Common myeloid progenitor, CD34-positive (primary cell): ENCODE measurements at regions of chr2 and their contacts with region 1.

Region 1: DNA sequence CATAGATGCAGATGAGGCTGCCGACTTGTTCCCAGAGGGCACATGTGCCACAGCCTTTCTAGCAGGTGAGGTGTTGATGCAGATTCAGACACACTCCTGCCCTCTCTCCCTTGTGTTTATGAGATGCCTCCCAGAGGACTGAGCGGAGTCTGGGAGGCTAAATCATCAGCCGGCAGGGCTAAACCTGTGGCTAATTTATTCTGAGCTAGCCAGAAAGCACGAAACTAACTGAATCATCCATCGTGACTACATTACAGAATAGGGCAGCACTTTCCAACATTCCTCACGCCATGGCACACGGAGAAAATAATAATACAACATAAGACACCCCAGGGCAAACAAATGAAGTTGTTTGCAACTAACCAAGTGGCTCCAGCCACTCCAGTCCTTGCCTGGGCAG is 101.7 kb upstream of the FZD7 start:
- DNase-seq: no peak
- H3K4me3 ChIP-seq: no peak overlapping the region
- H3K27ac ChIP-seq: no peak overlapping the region
- H3K4me1 ChIP-seq: peaks cover 0 to 26% (median 9%) of the 10 kb centered on the region in 4 experiments
- H3K27me3 ChIP-seq: no peaks in the 10 kb centered on the region

Region 2: DNA sequence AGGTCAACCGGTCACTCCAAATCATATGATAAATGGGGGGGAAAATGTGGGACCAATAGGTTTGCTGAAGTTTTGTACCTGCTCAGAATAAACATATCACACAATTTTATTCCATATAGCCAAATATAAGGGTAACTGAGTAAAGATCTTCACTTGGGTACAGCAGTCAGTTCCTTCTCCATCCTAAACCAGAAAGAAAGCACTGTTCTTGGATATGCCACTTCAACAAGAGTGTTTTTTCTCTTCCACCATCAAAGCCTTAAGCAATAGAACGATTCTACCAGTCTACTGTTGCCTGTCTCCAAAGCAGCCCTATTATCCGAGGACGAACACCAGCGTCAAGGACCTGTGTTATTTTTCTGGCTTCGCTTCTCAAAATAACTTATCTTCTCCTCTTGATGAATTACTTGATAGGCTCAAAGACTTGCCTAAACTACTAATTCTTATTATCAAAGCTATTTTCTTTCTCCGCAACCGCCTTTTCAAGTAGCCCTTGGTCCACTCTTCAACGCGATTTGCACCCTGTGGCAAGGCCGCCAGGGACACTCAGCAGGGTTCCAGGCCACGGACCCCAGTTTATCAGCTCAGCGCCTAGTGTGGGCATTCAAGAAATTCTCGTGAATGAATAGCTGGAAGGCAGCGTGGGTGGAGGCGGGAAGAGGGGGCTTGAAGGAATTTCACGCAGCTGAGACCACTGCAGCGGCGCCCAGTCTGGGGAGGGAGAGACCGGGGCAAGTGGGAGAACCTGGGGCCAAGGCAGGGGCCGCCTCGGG is 151.9 kb before region 1 on chr2:
- CTCF ChIA-PET with region 1: no interaction called
- POLR2A ChIA-PET with region 1: interaction called, 12 read pairs
- DNase-seq: peak; percentile 31 to 58 (median 39)
- H3K4me3 ChIP-seq: peak overlapping the region; percentile 82 to 99 (median 91)
- H3K27ac ChIP-seq: peak overlapping the region; percentile 85 to 92
- H3K4me1 ChIP-seq: peaks cover 7 to 75% (median 51%) of the 10 kb centered on the region in 4 experiments
- H3K27me3 ChIP-seq: no peaks in the 10 kb centered on the region

Region 3: DNA sequence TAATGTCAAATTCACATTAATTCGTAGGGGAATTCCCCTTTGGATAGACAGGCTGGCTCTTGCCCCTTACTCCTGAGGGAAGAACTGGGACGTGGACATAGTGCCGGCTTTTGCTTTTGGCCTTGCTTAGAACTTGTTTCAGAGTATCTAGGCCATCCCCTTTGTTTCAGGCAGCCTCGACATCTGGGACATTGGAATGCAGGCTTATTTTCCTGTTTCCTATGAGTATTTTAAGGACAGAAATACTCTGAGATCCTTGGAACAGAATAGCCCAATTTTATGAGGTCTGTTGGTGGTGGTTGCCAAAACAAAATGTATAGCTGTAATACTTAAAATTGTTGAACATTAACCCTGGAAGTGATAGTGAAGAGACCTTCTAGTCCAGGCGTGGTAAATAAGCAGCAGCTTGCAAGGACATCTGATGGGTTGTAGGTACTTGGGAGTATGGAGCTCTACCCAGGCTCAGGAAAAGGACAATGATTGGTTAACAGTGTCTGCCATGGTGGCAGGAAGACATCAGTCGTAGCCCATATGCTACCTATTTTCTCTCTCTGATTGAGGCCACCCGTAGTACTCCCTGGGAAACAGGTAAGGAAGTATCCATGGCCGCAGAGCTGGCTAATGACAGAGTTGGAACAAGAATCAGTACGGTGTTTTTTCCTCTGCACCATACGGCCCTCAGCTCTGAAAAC is 13.2 kb before region 1 on chr2:
- CTCF ChIA-PET with region 1: interaction called, 10 read pairs
- POLR2A ChIA-PET with region 1: no interaction called
- DNase-seq: no peak
- H3K4me3 ChIP-seq: no peak overlapping the region
- H3K27ac ChIP-seq: no peak overlapping the region
- H3K4me1 ChIP-seq: no peaks in the 10 kb centered on the region
- H3K27me3 ChIP-seq: no peaks in the 10 kb centered on the region